ENCODE measurements at regions of chr19 and their contacts with region 1.

Region 1: DNA sequence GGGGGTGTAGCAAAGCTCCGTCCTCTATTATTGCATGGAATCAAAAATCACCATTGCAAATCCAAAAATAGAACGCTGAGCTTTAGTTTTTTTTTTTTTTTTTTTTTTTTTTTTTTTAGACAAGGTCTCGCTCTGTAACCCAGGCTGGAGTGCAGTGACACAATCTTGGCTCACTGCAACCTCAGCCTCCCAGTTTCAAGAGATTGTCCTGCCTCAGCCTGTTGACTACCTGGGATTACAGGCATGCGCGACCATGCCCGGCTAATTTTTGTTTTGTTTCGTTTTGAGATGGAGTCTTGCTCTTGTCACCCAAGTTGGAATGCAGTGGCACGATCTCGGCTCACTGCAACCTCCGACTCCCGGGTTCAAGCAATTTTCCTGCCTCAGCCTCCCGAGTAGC is 15.3 kb upstream of the ZNF77 start:
- DNase-seq: no peak
- ATAC-seq: no peak
- H3K4me3 ChIP-seq: no peak overlapping the region
- H3K27ac ChIP-seq: no peak overlapping the region
- H3K4me1 ChIP-seq: no peaks in the 10 kb centered on the region
- H3K27me3 ChIP-seq: no peaks in the 10 kb centered on the region
- CTCF ChIP-seq: no peak

Region 2: DNA sequence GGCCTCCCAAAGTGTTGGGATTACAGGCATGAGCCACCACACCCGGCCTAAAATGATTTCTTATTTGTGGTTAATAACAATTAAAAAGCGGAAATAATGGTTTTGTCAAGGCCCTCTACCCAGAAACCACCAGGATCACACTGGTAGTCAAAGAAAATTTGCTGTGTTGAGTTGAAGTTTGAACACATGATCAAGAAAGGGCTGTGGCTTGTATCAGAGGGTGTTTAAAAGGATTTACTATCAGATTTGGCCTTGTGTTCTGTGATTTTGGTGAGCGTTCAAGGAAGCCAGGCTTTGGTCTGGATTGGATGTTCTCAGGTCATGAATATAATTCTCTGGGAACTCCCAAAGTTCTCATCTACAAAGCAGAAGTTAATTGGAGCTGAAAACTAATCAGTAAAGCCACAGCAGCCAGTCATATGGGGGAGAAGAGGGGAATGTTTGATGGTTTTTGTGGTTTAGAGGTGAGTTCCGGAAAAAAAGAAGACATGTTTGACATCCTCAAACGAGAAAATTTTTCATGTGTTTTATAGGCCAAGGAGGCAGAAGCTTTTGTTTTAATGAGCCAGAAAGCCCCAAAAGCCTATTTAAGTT is 103.6 kb before region 1 on chr19:
- CTCF ChIA-PET with region 1: interaction called, 10 read pairs
- POLR2A ChIA-PET with region 1: no interaction called
- in situ Hi-C with region 1: no loop called
- intact Hi-C with region 1: no loop called
- DNase-seq: no peak
- ATAC-seq: no peak
- H3K4me3 ChIP-seq: no peak overlapping the region
- H3K27ac ChIP-seq: no peak overlapping the region
- H3K4me1 ChIP-seq: no peaks in the 10 kb centered on the region
- H3K27me3 ChIP-seq: no peaks in the 10 kb centered on the region
- CTCF ChIP-seq: no peak

Region 3: DNA sequence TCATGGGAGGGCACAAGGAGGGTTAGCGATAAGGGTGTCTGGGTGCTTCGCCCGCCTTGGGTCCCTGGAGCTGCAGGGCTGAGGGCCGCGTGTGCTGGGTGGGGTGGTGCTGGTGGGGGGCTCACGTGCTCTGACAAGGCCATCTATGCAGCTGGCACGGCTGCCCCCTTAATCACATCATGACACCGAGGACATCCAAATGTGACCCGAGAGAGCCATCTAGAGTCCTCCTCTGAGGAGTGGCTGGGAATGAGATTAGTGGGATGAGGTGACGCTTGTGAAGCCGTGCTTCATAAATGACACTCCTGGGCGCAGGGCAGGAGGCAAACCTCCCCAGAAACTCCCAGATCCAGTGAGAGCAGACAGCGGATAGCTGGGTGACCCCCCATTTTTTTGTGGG is 552.4 kb after region 1 on chr19:
- CTCF ChIA-PET with region 1: no interaction called
- POLR2A ChIA-PET with region 1: interaction called, 12 read pairs
- in situ Hi-C with region 1: no loop called
- intact Hi-C with region 1: no loop called
- DNase-seq: no peak
- ATAC-seq: no peak
- H3K4me3 ChIP-seq: no peak overlapping the region
- H3K27ac ChIP-seq: no peak overlapping the region
- H3K4me1 ChIP-seq: no peaks in the 10 kb centered on the region; the same call in none of the 2 replicates
- H3K27me3 ChIP-seq: no peaks in the 10 kb centered on the region
- CTCF ChIP-seq: no peak